IMR-90 (cell line): ENCODE measurements at regions of chr5 and their contacts with region 1.

Region 1: DNA sequence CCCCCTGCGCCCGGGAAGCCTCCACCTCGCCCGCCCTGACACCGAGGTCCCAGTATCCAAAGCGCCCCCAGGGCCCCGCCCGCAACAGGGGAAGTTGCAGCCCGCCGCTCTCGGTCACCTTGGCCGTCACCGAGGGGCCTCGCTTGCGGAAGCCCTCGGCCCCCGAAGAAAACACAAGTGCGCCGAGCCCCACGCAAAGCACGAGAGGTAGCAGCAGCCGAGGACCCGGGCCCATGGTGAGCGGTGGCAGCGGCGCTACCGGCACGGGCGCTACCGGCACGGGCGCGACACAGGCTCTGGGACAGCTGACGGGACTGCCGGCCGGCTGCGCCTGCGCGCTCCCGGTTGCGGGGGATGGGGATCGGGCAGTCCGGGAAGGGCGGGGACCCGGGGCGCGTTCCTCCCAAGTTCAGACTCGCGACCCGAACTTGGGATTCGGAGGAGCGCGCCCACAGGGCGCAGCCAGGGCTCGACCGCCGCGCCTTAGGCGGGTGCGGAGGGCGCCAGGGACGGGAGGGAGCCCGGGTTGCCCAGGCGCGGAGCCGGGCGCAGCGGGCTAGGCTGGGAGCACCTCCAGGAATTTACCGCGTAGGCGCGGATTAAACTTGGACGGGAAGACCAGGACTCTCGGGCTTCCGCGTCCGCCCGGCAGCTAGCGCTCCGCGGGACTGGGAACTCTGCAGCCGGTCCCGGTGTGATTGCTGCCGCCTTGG is at the start of gene PPIC:
- DNase-seq: peak; percentile 71
- ATAC-seq: peak; percentile 93
- H3K4me3 ChIP-seq: peak within 1 kb of the TSS; percentile 79
- H3K27ac ChIP-seq: peak within 1 kb of the TSS; percentile 74
- H3K4me1 ChIP-seq: no peaks in the 10 kb centered on the region; the same call in 1 of the 2 replicates
- H3K27me3 ChIP-seq: no peaks in the 10 kb centered on the region
- CTCF ChIP-seq: no peak
- POLR2A ChIP-seq: no peak; the same call in 1 of the 2 replicates
- RAD21 ChIP-seq: no peak
- total RNA-seq, gene PPIC: 20.6 and 36.9 TPM in 2 replicates

Region 2: DNA sequence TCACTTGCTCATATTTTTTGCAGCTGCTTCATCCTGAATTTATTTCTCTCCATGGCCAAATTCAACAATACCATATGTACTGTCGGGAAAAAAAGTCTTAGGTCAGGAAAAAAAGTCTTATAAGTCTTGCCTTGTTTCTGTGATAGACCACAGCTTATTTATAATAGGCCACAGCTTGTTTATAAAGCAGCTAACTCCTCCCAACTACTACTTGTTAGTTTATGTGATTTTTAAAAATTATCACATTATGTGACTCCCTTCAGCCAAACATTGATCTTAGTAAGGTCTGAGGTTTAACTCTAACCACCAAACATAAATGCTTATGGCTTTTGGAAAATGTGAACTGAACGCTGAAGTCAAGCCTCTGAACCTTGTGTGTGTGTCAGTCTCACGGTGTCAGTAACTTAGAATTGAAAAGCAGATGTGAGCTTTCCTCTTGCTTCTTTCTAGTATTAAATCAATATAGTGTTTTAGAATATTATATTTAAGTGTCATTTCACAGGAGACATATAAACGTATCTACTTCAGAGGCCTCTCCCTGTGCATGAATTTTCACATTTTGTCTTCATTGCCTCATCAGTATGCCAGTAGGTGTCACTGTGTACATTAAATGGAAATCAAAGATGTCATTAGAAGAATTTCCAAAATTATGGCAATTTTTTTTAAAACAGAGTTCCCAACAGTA is 139.8 kb before region 1 on chr5:
- CTCF ChIA-PET with region 1: no interaction called
- POLR2A ChIA-PET with region 1: no interaction called
- dilution Hi-C with region 1: no loop called
- in situ Hi-C with region 1: no loop called
- intact Hi-C with region 1: loop called (anchors 1 kb)
- DNase-seq: peak; percentile 85
- ATAC-seq: peak; percentile 91
- H3K4me3 ChIP-seq: no peak overlapping the region
- H3K27ac ChIP-seq: no peak overlapping the region
- H3K4me1 ChIP-seq: peaks cover 3% of the 10 kb centered on the region; the same call in 1 of the 2 replicates
- H3K27me3 ChIP-seq: no peaks in the 10 kb centered on the region; the same call in 1 of the 2 replicates
- CTCF ChIP-seq: peak; percentile 61
- POLR2A ChIP-seq: no peak
- RAD21 ChIP-seq: peak; percentile 65

Region 3: GRCh38 chr5:123119334-123119986 is 82.9 kb after region 1 on chr5:
- CTCF ChIA-PET with region 1: no interaction called
- POLR2A ChIA-PET with region 1: no interaction called
- dilution Hi-C with region 1: no loop called
- in situ Hi-C with region 1: no loop called
- intact Hi-C with region 1: loop called (anchors 1 kb)
- DNase-seq: peak; percentile 74
- ATAC-seq: peak; percentile 88
- H3K4me3 ChIP-seq: peak overlapping the region; percentile 23; the same call in 1 of the 2 replicates
- H3K27ac ChIP-seq: peak overlapping the region; percentile 88
- H3K4me1 ChIP-seq: peaks cover 15% of the 10 kb centered on the region
- H3K27me3 ChIP-seq: no peaks in the 10 kb centered on the region
- CTCF ChIP-seq: peak; percentile 31; the same call in 1 of the 2 replicates
- POLR2A ChIP-seq: no peak
- RAD21 ChIP-seq: peak; percentile 16; the same call in 1 of the 2 replicates

Region 4: GRCh38 chr5:123344816-123345426 is 308.4 kb after region 1 on chr5:
- CTCF ChIA-PET with region 1: no interaction called
- POLR2A ChIA-PET with region 1: no interaction called
- dilution Hi-C with region 1: no loop called
- in situ Hi-C with region 1: loop called (anchors 5 kb)
- intact Hi-C with region 1: loop called (anchors 2 kb)
- DNase-seq: peak; percentile 52
- ATAC-seq: peak; percentile 79
- H3K4me3 ChIP-seq: no peak overlapping the region
- H3K27ac ChIP-seq: no peak overlapping the region
- H3K4me1 ChIP-seq: no peaks in the 10 kb centered on the region
- H3K27me3 ChIP-seq: no peaks in the 10 kb centered on the region
- CTCF ChIP-seq: peak; percentile 83
- POLR2A ChIP-seq: no peak
- RAD21 ChIP-seq: peak; percentile 71